CD8-positive, alpha-beta T cell (primary cell): ENCODE measurements at regions of chr10 and their contacts with region 1.

Region 1: GRCh38 chr10:108346066-108346465 is 1181.6 kb upstream of the SORCS1 start:
- DNase-seq: peak in 1 of 9 experiments; percentile 19
- ATAC-seq: no peak
- H3K4me3 ChIP-seq: no peak overlapping the region
- H3K4me3 Mint-ChIP-seq: no peak overlapping the region
- H3K27ac ChIP-seq: no peak overlapping the region
- H3K27ac Mint-ChIP-seq: no peak overlapping the region
- H3K4me1 ChIP-seq: no peaks in the 10 kb centered on the region
- H3K4me1 Mint-ChIP-seq: no peaks in the 10 kb centered on the region
- H3K27me3 ChIP-seq: no peaks in the 10 kb centered on the region
- H3K27me3 Mint-ChIP-seq: no peaks in the 10 kb centered on the region
- CTCF ChIP-seq: no peak

Region 2: GRCh38 chr10:108275895-108276685 is 70.0 kb before region 1 on chr10:
- CTCF ChIA-PET with region 1: no interaction called
- POLR2A ChIA-PET with region 1: no interaction called
- intact Hi-C with region 1: no loop called
- DNase-seq: peak in 1 of 9 experiments; percentile 1
- ATAC-seq: no peak
- H3K4me3 ChIP-seq: no peak overlapping the region
- H3K4me3 Mint-ChIP-seq: no peak overlapping the region
- H3K27ac ChIP-seq: no peak overlapping the region
- H3K27ac Mint-ChIP-seq: no peak overlapping the region
- H3K4me1 ChIP-seq: no peaks in the 10 kb centered on the region
- H3K4me1 Mint-ChIP-seq: no peaks in the 10 kb centered on the region
- H3K27me3 ChIP-seq: no peaks in the 10 kb centered on the region
- H3K27me3 Mint-ChIP-seq: no peaks in the 10 kb centered on the region
- CTCF ChIP-seq: no peak

Region 3: DNA sequence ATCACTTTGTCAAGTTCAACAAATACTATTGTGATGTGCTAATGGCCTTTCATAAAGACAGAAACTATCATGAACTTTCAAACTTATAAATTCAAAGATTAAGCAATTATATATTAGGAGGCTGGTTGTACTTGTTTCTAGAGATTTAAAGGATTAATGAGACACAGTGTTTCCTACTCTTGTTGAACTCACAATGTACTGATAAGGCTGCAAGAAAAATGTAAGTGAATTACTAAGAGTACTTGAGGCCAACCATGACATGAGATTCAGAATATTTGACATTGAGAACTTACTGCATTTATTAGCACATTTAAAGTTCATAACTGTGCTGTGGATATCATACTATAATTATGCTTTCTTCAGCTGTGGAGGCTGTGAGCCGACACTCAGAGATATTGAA is 28.9 kb after region 1 on chr10:
- CTCF ChIA-PET with region 1: no interaction called
- POLR2A ChIA-PET with region 1: no interaction called
- intact Hi-C with region 1: loop called in 1 of 2 experiments (anchors 1 kb)
- DNase-seq: no peak
- ATAC-seq: no peak
- H3K4me3 ChIP-seq: no peak overlapping the region
- H3K4me3 Mint-ChIP-seq: no peak overlapping the region
- H3K27ac ChIP-seq: no peak overlapping the region
- H3K27ac Mint-ChIP-seq: no peak overlapping the region
- H3K4me1 ChIP-seq: no peaks in the 10 kb centered on the region
- H3K4me1 Mint-ChIP-seq: no peaks in the 10 kb centered on the region
- H3K27me3 ChIP-seq: no peaks in the 10 kb centered on the region
- H3K27me3 Mint-ChIP-seq: no peaks in the 10 kb centered on the region
- CTCF ChIP-seq: no peak

Region 4: DNA sequence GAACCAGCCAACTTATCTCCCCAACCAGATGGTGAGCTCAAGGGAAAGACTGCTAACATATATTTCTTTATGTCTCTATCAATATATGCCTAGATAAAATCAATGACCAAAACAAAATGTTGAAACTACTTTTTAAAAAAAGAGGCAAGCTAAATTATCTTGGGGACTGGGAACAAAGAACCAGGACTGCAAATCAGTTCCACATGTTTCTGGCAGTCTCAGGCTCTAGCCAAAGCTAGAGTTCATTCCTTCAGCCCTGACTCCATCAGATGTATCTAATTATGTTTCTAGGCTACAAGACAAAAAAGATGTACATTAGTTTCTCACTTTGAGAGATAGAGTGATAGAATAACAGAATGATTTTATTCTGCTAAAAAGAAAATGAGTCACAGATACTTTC is 108.7 kb after region 1 on chr10:
- CTCF ChIA-PET with region 1: no interaction called
- POLR2A ChIA-PET with region 1: no interaction called
- intact Hi-C with region 1: no loop called
- DNase-seq: no peak
- ATAC-seq: no peak
- H3K4me3 ChIP-seq: no peak overlapping the region
- H3K4me3 Mint-ChIP-seq: no peak overlapping the region
- H3K27ac ChIP-seq: no peak overlapping the region
- H3K27ac Mint-ChIP-seq: no peak overlapping the region
- H3K4me1 ChIP-seq: no peaks in the 10 kb centered on the region
- H3K4me1 Mint-ChIP-seq: no peaks in the 10 kb centered on the region
- H3K27me3 ChIP-seq: no peaks in the 10 kb centered on the region
- H3K27me3 Mint-ChIP-seq: no peaks in the 10 kb centered on the region
- CTCF ChIP-seq: no peak